ENCODE measurements at regions of chrX and their contacts with region 1.

Region 1: DNA sequence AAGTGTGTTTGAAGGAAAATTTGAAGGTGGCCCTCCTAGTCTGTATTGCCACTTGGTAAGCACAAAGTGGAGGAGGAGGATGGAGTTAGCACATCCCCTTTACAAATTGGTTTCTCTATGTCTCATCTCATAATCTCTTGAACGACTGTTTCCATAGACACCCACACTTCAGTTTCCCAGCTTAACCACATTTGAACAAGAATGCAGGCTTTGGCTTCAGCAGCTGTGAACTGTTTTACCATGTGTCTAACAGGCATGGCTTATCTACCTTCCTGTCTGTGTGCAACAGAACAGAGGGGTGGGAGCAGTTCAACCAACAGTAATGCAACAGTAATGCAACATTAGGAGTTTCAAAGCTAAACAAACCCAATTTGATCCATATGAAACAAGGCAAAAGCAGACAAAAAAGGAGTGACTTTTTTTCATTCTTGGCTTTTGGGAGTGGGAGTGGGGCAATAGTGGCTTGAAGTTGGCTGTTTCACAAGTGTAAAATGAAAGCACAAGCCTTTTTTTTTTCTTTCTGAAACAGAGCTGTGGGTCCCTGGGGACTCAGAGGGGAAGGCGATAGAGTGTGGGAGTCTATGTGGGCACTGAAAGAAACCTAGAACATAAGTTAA is 108.0 kb downstream of the ITM2A start:
- DNase-seq: peak; percentile 60
- H3K4me3 Mint-ChIP-seq: peak overlapping the region; percentile 68
- H3K27ac Mint-ChIP-seq: peak overlapping the region; percentile 88
- H3K4me1 Mint-ChIP-seq: peaks cover 63% of the 10 kb centered on the region
- H3K27me3 Mint-ChIP-seq: no peaks in the 10 kb centered on the region

Region 2: GRCh38 chrX:78375894-78376293 is 883.3 kb before region 1 on chrX:
- intact Hi-C with region 1: loop called (anchors 10 kb)
- DNase-seq: no peak
- H3K4me3 Mint-ChIP-seq: no peak overlapping the region
- H3K27ac Mint-ChIP-seq: peak overlapping the region; percentile 31
- H3K4me1 Mint-ChIP-seq: peaks cover 31% of the 10 kb centered on the region
- H3K27me3 Mint-ChIP-seq: no peaks in the 10 kb centered on the region

Region 3: GRCh38 chrX:78653118-78653822 is 605.9 kb before region 1 on chrX:
- intact Hi-C with region 1: loop called (anchors 5 kb)
- DNase-seq: no peak
- H3K4me3 Mint-ChIP-seq: peak overlapping the region; percentile 70
- H3K27ac Mint-ChIP-seq: peak overlapping the region; percentile 88
- H3K4me1 Mint-ChIP-seq: peaks cover 28% of the 10 kb centered on the region
- H3K27me3 Mint-ChIP-seq: no peaks in the 10 kb centered on the region

Region 4: GRCh38 chrX:78979789-78980464 is 279.3 kb before region 1 on chrX:
- intact Hi-C with region 1: loop called (anchors 1 kb)
- DNase-seq: no peak
- H3K4me3 Mint-ChIP-seq: peak overlapping the region; percentile 69
- H3K27ac Mint-ChIP-seq: peak overlapping the region; percentile 100
- H3K4me1 Mint-ChIP-seq: peaks cover 22% of the 10 kb centered on the region
- H3K27me3 Mint-ChIP-seq: no peaks in the 10 kb centered on the region

Region 5: GRCh38 chrX:79146640-79147390 is 112.4 kb before region 1 on chrX:
- intact Hi-C with region 1: loop called (anchors 1 kb)
- DNase-seq: no peak
- H3K4me3 Mint-ChIP-seq: peak overlapping the region; percentile 92
- H3K27ac Mint-ChIP-seq: peak overlapping the region; percentile 89
- H3K4me1 Mint-ChIP-seq: peaks cover 48% of the 10 kb centered on the region
- H3K27me3 Mint-ChIP-seq: no peaks in the 10 kb centered on the region

Region 6: DNA sequence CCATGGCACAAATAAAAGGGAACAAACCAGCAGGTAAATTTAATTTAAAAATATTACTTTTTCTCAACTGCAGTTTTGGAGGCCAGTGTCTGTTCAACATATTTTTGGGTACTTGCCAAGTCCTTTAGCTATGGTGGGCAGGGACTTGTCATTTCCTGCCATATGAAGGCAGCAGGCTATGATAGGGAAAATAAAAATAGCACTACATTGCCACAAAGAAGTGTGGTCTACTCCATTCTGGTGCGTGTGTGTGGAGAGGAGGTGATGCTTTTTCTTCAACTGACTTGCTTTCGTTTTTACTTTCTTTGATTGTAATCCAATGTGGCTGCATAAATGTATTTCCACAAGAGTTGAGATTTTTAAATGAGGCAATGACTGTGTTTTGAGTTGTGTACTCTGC is 97.5 kb before region 1 on chrX:
- intact Hi-C with region 1: no loop called
- DNase-seq: peak; percentile 43
- H3K4me3 Mint-ChIP-seq: peak overlapping the region; percentile 89
- H3K27ac Mint-ChIP-seq: peak overlapping the region; percentile 99
- H3K4me1 Mint-ChIP-seq: peaks cover 54% of the 10 kb centered on the region
- H3K27me3 Mint-ChIP-seq: no peaks in the 10 kb centered on the region

Region 7: DNA sequence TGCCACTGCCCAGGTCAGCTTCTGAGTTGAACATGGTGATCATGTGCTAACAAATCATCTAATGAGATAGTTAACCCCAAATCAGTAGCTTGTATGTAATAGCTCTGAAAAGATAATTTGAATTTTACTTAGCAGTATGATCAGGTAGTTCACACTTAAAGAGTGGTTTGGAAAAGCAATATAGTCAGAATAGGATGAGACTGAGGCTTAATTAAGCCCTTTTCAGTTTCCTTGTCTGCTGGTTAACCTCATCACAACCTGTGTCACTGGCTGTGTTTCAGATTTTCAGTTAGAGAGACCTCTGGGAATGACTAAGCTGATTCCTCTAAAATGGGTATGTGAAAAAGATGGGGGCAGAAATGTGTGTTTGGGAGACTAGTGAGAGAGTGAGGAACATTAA is 76.6 kb before region 1 on chrX:
- intact Hi-C with region 1: loop called (anchors 1 kb)
- DNase-seq: no peak
- H3K4me3 Mint-ChIP-seq: peak overlapping the region; percentile 0
- H3K27ac Mint-ChIP-seq: peak overlapping the region; percentile 91
- H3K4me1 Mint-ChIP-seq: peaks cover 38% of the 10 kb centered on the region
- H3K27me3 Mint-ChIP-seq: no peaks in the 10 kb centered on the region

Measured in activated T-helper 2 cell treated with anti-CD3 and anti-CD28 coated beads, Interferon-gamma antibody, Interleukin-2, Interleukin-4, amounts not matched to agents 10 μg/mL and 5 μg/mL and 100 μg/mL, durations not matched to agents 14 hours and 24 hours and 36 hours (primary cell).